ENCODE measurements at regions of chr15 and their contacts with region 1.

Region 1: DNA sequence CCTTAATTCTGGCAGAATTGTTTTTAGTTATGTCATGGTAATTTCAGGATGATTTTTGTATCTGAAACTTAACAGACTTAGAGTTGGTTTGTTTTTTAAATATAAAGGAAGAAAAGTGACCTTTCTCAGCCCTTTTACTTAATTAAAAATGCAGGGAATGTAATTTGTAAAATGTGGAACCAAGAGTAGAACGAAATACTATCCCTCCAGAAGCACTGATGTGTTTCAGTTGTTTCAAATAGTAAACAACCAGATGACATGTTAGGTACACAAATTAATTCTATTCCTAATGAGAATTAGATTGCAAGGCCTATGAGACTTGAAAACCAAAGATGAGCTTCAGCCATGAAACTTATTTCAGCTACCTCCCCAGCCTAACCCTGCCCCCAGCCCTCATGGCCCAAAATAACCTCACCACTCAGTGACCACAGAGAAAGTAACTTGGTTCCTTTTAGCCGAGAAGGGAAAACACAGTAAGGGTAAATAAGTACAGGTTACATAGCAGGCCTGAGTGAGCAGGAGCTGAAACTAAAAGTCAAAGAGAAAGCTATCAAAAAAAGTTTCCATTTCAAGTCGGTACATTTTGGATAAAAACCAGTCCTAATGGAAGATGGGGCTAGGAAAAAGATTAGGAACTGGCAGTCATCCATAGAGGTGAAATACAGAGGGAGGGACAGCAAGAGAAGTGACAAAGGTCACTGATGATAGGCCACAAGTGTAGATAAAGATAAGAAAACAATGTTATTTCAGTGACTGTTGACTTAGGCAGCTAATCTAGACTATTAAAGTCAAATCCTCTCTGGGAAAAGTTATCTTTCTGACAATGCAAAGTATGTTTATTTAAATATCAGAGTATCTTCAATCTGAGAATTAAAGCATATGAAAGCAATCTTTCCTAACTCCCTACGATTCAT is 23.2 kb downstream of the SENP8 start:
- DNase-seq: peak; percentile 87
- ATAC-seq: peak; percentile 100
- H3K4me3 ChIP-seq: peak overlapping the region; percentile 34; the same call in 1 of the 2 replicates
- H3K27ac ChIP-seq: peak overlapping the region; percentile 93
- H3K4me1 ChIP-seq: peaks cover 20% of the 10 kb centered on the region
- H3K27me3 ChIP-seq: no peaks in the 10 kb centered on the region
- CTCF ChIP-seq: no peak
- EP300 ChIP-seq: peak; percentile 81 to 84
- POLR2A ChIP-seq: no peak
- RAD21 ChIP-seq: peak; percentile 40; the same call in 1 of the 2 replicates

Region 2: GRCh38 chr15:72078887-72079286 is 62.5 kb before region 1 on chr15:
- CTCF ChIA-PET with region 1: no interaction called
- POLR2A ChIA-PET with region 1: interaction called, 3 read pairs
- RAD21 ChIA-PET with region 1: no interaction called
- SMC1A ChIA-PET with region 1: interaction called, 5 read pairs
- in situ Hi-C with region 1: no loop called
- intact Hi-C with region 1: loop called (anchors 5 kb)
- DNase-seq: peak; percentile 80
- ATAC-seq: peak; percentile 99
- H3K4me3 ChIP-seq: no peak overlapping the region
- H3K27ac ChIP-seq: peak overlapping the region; percentile 66
- H3K4me1 ChIP-seq: peaks cover 8% of the 10 kb centered on the region
- H3K27me3 ChIP-seq: no peaks in the 10 kb centered on the region
- CTCF ChIP-seq: no peak
- EP300 ChIP-seq: peak; percentile 68 to 76; a peak in 3 of 4 replicates
- POLR2A ChIP-seq: no peak
- RAD21 ChIP-seq: no peak

Region 3: DNA sequence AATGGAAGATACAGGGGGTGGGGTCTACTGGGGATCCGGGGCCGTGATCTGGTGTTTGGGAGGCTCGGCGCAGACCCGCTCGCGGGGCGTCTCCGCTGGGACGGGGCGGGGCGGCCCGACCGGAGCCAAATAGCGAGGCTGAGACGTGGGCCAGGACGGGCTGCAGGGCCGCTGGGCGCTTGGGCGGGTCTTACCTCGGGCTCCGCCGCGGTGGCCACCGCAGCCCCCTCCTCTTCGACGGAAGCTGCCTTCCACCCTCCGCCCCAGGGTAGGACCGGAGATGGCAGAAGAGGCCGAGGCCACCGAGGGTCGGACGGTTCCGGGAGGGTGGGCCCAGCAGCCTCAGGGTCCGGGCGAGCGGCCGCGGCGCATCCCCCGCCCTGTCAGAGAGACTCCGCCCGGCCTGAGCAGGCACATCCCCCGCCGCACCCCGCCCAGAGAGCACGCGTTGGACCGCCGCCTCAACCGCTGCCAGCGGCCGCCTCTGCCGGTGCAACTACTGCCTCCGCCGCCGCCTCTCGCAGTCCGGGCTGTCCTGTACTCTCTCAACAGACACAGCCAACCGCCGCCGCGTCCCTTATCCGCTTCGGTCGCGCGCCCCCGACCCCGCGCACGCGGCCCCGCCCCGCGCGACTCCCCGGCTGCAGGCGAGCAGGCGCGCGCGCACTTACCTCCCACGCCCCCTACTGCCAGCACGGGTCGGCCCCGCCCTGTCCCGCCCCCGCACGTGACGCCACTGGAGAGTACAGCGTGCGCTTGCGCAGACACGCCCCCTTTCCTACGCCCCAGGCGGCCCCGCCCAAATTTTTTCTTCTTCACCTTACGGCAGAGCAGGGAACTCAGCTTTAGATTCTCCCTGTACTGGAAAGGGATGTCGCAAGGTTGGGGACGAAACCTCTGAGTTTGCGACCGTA is 23.7 kb before region 1 on chr15 and contains the start of gene MYO9A:
- CTCF ChIA-PET with region 1: no interaction called
- POLR2A ChIA-PET with region 1: interaction called, 9 read pairs
- RAD21 ChIA-PET with region 1: interaction called, 11 read pairs
- SMC1A ChIA-PET with region 1: interaction called, 9 read pairs
- in situ Hi-C with region 1: no loop called
- intact Hi-C with region 1: loop called (anchors 1 kb)
- DNase-seq: peak; percentile 96
- ATAC-seq: peak; percentile 86
- H3K4me3 ChIP-seq: peak within 1 kb of the TSS; percentile 94
- H3K27ac ChIP-seq: peak within 1 kb of the TSS; percentile 91
- H3K4me1 ChIP-seq: peaks cover 8% of the 10 kb centered on the region
- H3K27me3 ChIP-seq: no peaks in the 10 kb centered on the region
- CTCF ChIP-seq: peak in 2 of 3 experiments; percentile 14 to 19; a peak in 3 of 6 replicates
- EP300 ChIP-seq: no peak
- POLR2A ChIP-seq: peak; percentile 86
- RAD21 ChIP-seq: no peak
- polyA plus RNA-seq, gene MYO9A: 3.3 to 5.9 TPM